ENCODE measurements at regions of chr2 and their contacts with region 1.

Region 1: DNA sequence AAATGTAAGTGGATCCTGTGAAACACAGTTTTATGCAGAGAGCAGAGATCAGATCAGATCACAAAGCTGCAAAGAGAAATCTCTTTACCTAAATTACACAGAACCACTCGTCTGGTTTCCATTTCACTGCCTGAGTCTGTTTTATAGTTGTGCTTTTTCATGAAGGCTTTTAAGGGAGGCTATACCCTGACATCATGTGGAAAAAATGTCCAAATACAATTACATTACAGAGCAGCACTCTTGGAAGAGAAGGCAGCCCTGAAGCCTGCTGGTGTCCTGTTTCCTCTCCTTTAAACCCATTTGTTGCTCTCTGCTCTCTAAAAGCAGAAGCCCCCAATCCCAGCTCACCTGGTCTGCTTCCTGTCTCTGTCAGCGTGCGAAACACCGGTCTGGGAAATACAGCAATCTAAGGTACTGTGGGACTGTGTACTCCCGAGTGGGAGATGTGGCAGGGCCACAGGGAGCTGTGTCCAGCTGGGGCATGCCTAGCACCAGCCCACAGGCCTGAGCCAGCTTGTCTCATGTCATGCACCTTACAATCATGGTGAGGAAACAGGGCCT is 24.8 kb upstream of the ZFP36L2 start:
- DNase-seq: peak; percentile 80
- H3K4me3 ChIP-seq: no peak overlapping the region
- H3K27ac ChIP-seq: peak overlapping the region; percentile 77 to 100
- H3K4me1 ChIP-seq: peaks cover 9 to 53% of the 10 kb centered on the region in 2 experiments; a peak in 2 of 4 replicates
- H3K27me3 ChIP-seq: no peaks in the 10 kb centered on the region
- CTCF ChIP-seq: no peak; the same call in 1 of the 2 replicates
- EP300 ChIP-seq: peak; percentile 74 to 97; a peak in 3 of 4 replicates
- RAD21 ChIP-seq: peak; percentile 63

Region 2: DNA sequence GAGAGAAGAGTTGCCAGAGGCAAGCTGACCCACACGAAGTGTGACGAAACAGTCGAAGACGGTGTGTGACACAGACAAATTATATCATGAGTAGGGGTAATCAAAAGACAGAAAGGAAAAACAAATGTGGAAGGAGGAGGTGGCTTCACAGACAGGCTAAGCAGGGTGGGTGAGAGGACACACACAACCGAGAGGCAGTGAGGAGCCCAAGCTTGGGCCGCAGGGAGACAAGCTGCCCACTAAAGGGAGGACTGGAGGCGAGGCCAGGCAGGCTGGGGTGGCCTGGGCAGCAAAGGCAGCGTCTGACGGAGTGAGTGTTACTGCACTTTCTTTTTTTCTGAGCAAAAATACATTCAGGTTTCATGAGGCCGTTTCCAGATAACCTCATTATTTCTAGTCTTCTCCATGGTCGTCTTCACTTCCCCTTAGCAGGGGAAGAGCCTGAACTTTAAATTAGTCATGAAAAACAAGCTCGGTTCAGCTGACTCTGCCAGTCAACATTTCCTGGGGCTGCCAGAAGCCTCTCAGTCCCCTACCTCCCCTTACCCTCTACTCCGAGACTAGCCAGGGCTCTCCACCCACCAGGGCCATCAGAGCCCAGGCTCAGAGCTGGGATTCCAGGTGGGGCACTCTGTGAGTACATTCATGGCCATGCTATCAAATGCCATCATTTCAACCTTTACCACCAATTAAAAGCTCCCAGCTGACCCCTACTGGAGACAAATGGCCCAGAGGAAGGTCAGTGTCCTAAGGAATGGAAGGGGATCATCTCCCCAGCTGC is 11.1 kb before region 1 on chr2:
- CTCF ChIA-PET with region 1: interaction called, 10 read pairs
- POLR2A ChIA-PET with region 1: no interaction called
- DNase-seq: no peak
- H3K4me3 ChIP-seq: no peak overlapping the region
- H3K27ac ChIP-seq: no peak overlapping the region
- H3K4me1 ChIP-seq: peaks cover 0 to 6% of the 10 kb centered on the region in 2 experiments; a peak in 1 of 4 replicates
- H3K27me3 ChIP-seq: no peaks in the 10 kb centered on the region
- CTCF ChIP-seq: 0 out of 2 replicates have a peak, but pooled peaks have one; percentile 21
- EP300 ChIP-seq: no peak
- RAD21 ChIP-seq: no peak; the same call in 1 of the 2 replicates

Region 3: GRCh38 chr2:43269074-43269572 is 17.9 kb after region 1 on chr2:
- CTCF ChIA-PET with region 1: interaction called, 21 read pairs
- POLR2A ChIA-PET with region 1: interaction called, 25 read pairs
- DNase-seq: peak; percentile 77
- H3K4me3 ChIP-seq: no peak overlapping the region
- H3K27ac ChIP-seq: peak overlapping the region; percentile 54 to 99
- H3K4me1 ChIP-seq: peaks cover 31 to 73% of the 10 kb centered on the region in 2 experiments
- H3K27me3 ChIP-seq: no peaks in the 10 kb centered on the region
- CTCF ChIP-seq: peak; percentile 38; the same call in 1 of the 2 replicates
- EP300 ChIP-seq: peak; percentile 60 to 73; a peak in 2 of 4 replicates
- RAD21 ChIP-seq: peak; percentile 47

Region 4: GRCh38 chr2:43276962-43277391 is 25.7 kb after region 1 on chr2:
- CTCF ChIA-PET with region 1: interaction called, 6 read pairs
- POLR2A ChIA-PET with region 1: interaction called, 10 read pairs
- DNase-seq: peak; percentile 56
- H3K4me3 ChIP-seq: no peak overlapping the region
- H3K27ac ChIP-seq: peak overlapping the region; percentile 42 to 95; a peak in 3 of 4 replicates
- H3K4me1 ChIP-seq: peaks cover 39 to 58% of the 10 kb centered on the region in 2 experiments
- H3K27me3 ChIP-seq: no peaks in the 10 kb centered on the region
- CTCF ChIP-seq: no peak
- EP300 ChIP-seq: no peak; a peak in 1 of 4 replicates
- RAD21 ChIP-seq: no peak

Region 5: DNA sequence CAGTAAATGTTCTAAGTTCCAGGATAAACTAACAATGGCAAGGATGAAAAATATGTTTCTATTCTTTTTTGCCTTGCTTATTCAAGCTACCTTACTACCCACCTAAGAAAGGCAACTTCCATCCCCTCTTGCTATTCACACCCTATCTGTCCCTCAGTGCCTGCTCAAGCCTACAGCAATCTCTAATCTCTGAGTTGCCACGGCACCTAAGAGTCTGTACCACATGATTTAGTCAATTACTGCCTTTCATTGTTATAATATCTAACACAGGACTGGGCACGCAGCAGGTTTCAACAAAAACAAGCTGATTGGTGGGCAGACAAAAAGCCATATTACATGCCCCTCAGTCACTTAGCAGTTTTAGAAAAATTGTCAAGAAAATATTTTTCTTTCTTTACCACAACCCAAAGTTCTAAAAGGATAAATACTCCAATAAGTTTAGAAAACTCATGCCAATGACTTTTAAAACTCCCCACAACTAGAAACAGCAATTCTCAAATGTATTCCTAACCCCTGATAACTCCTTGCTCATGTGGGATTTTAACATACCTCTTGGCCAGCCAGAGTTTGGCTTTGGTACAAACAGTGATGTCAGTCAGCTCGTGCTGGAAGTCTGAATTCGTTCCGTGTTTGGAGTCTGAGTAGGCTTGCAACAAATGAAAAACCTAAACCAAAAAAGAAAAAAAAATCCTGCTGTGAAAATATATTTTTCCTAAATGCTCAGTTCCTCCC is 92.5 kb after region 1 on chr2:
- CTCF ChIA-PET with region 1: interaction called, 3 read pairs
- POLR2A ChIA-PET with region 1: interaction called, 11 read pairs
- DNase-seq: no peak
- H3K4me3 ChIP-seq: no peak overlapping the region
- H3K27ac ChIP-seq: peak overlapping the region; percentile 76 to 100
- H3K4me1 ChIP-seq: peaks cover 45 to 75% of the 10 kb centered on the region in 2 experiments
- H3K27me3 ChIP-seq: no peaks in the 10 kb centered on the region
- CTCF ChIP-seq: no peak
- EP300 ChIP-seq: peak; percentile 11 to 50; a peak in 2 of 4 replicates
- RAD21 ChIP-seq: no peak; the same call in 1 of the 2 replicates

Measured in SK-N-SH (cell line).